ENCODE measurements at regions of chr15 and their contacts with region 1.

Region 1: DNA sequence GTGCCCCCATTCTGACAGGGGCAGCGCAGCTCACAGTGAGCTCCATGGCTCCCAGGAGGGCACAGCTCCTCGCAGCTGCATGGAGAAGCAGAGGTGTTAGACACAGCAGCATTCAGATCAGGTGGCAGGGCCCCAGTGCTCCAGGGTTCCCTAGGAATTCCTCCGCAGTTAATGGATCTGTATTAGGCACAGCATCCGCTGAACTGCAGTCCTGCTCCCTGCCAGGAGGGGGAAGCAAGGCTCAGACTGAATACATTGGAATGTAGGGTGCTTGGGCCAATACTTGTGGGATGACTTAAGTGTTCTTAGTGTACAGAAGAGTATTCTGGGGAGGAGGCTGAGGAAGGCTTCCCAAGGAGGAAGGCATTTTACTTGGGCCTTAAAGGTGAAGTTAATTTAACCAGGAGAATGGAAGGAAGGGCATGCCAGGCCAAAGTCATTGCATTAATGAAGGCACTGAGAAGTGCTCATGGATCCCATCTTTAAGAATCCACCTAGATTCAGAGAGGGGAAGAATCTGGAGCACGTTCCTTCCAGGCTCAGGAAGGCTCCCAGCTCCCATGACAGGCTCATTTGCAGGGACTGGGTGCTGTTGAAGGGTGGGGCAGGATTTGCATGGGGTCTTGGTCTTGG is 111.6 kb downstream of the RAB11A start:
- DNase-seq: peak; percentile 69 to 90
- H3K4me3 ChIP-seq: no peak overlapping the region
- H3K27ac ChIP-seq: no peak overlapping the region
- H3K4me1 ChIP-seq: peaks cover 10 to 21% (median 11%) of the 10 kb centered on the region in 4 experiments
- H3K27me3 ChIP-seq: no peaks in the 10 kb centered on the region
- CTCF ChIP-seq: peak; percentile 80 to 96 (median 86)
- EP300 ChIP-seq: no peak
- POLR2A ChIP-seq: no peak
- RAD21 ChIP-seq: peak; percentile 79 to 86

Region 2: DNA sequence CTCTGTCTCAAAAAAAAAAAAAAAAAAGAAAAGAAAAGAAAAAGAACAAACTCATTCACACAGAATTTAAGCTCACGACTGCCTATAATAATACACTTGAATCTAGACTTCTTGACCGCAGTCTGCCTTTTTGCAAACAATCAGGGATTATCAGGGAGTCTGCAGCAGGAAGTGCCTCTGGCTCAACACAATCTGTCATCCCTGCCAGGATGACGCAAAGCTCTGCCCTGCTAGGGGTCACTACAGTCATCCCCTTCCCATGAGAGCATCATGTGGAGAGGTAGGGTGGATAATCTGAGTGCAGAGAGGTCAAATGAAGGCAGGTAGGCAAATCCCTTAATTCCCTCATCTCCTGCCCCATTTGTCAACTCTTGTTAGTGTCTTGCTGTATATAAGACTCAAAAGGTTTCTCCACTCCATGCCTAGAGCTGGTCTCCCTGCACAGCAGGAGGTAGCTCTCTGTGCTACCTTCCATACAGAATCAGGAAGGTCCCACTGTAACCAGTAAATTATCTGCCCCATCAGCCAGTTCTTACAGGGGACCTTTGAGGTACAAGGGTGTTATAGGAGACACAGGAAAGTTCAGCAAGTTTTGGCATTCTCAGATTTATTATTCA is 870.2 kb before region 1 on chr15:
- CTCF ChIA-PET with region 1: no interaction called
- POLR2A ChIA-PET with region 1: no interaction called
- DNase-seq: no peak
- H3K4me3 ChIP-seq: no peak overlapping the region
- H3K27ac ChIP-seq: no peak overlapping the region
- H3K4me1 ChIP-seq: no peaks in the 10 kb centered on the region
- H3K27me3 ChIP-seq: no peaks in the 10 kb centered on the region
- CTCF ChIP-seq: no peak
- EP300 ChIP-seq: no peak
- POLR2A ChIP-seq: no peak
- RAD21 ChIP-seq: no peak

Region 3: DNA sequence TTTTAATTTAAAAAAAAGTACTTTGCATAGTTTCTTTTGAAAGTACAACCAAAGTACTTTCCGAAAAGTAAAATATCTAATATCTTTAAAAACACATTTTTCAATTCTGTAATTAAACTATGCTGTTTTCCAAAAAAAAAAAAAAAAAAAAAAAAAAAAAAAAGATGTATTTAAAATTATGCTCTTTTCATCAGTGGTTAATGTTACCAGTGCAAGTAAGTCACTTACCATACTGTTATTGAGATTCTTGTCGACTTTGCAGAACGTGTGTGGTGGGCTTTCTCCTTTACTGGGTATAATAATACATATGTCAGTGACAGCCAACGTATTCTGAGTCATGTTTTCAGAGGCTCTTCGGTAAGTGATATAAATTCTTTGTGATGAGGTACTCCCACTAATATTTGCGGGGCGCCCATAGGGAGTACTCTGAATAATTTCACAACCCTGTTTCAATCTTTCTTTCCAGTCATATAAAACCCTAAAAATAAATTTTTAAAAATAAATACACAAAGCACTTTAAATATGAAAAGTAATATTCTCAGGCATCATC is 228.7 kb before region 1 on chr15:
- CTCF ChIA-PET with region 1: no interaction called
- POLR2A ChIA-PET with region 1: no interaction called
- DNase-seq: no peak
- H3K4me3 ChIP-seq: no peak overlapping the region
- H3K27ac ChIP-seq: no peak overlapping the region
- H3K4me1 ChIP-seq: no peaks in the 10 kb centered on the region
- H3K27me3 ChIP-seq: no peaks in the 10 kb centered on the region
- CTCF ChIP-seq: no peak
- EP300 ChIP-seq: no peak
- POLR2A ChIP-seq: no peak
- RAD21 ChIP-seq: no peak

Region 4: DNA sequence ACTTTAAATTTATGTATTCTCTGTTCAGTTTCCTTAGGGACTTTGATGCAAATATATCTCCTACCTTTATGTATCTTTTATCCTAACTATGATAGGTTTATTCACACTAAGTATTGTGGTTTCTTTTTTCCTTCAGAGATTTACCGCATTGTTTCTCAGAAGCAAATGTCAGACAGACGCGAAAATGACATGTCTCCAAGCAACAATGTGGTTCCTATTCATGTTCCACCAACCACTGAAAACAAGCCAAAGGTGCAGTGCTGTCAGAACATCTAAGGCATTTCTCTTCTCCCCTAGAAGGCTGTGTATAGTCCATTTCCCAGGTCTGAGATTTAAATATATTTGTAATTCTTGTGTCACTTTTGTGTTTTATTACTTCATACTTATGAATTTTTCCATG is 93.4 kb before region 1 on chr15:
- CTCF ChIA-PET with region 1: no interaction called
- POLR2A ChIA-PET with region 1: no interaction called
- DNase-seq: no peak
- H3K4me3 ChIP-seq: no peak overlapping the region
- H3K27ac ChIP-seq: no peak overlapping the region
- H3K4me1 ChIP-seq: no peaks in the 10 kb centered on the region
- H3K27me3 ChIP-seq: no peaks in the 10 kb centered on the region
- CTCF ChIP-seq: no peak
- EP300 ChIP-seq: no peak
- POLR2A ChIP-seq: no peak
- RAD21 ChIP-seq: no peak

Region 5: DNA sequence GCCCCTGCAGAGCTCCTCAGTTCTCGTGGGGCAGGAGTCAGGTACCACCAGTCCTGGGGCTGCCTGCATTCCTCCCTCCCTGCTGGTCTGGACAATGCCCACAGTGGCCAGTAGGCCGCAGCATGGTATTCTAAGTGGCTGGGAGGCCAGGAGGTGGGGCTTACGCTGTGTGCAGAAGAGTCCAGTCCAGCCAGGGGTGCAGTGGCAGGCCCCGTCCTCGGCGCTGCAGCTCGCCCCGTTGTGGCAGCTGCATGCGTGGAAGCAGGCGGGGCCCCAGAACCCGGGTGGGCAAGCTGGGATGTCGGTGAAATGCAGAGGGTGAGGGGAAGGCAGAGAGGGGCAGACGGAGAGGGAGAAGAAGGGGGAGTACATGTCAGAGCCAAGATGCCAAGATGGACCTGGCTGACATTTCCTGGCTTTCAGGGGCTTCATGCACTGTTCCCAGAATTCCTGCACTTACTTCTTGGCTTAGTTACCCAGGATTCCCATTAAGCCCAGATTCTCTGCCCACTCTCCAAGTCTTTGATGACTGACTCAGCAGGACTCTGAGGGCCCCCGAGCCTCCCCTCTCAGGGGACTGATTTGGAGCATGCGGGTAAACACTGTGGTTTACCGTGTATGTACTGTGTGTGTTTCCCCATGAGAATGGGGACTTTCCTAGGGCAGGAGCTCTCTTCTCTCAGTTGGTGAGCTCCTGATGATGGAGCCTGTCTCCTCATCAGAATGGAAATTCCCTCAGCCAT is 64.1 kb before region 1 on chr15:
- CTCF ChIA-PET with region 1: interaction called, 10 read pairs
- POLR2A ChIA-PET with region 1: no interaction called
- DNase-seq: peak; percentile 47 to 81
- H3K4me3 ChIP-seq: no peak overlapping the region
- H3K27ac ChIP-seq: no peak overlapping the region
- H3K4me1 ChIP-seq: peaks cover 0 to 8% (median 3%) of the 10 kb centered on the region in 4 experiments; a peak in 5 of 7 replicates
- H3K27me3 ChIP-seq: no peaks in the 10 kb centered on the region
- CTCF ChIP-seq: peak; percentile 88 to 94 (median 91)
- EP300 ChIP-seq: 0 out of 3 replicates have a peak, but pooled peaks of 1 of the 2 experiments have one; percentile 22
- POLR2A ChIP-seq: no peak
- RAD21 ChIP-seq: peak; percentile 91 to 98

Region 6: DNA sequence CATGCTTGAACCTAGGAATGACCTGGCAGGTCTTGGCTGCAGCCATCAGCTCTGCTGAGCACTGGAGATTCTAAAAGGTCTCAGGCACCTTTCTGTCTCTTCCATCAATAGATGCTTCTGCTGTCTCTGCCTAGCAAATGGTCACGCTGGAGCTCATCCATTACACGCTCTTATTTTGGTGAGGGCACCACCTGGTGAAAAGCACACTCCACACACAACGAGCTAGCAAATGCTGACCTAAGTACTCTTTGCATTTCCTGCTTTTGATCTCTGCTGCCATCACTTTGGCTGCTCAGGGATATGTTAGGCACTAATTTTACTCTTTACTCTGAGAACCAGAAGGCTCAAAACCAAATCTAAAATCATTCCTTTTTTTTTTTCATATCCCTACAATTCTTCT is 20.4 kb before region 1 on chr15:
- CTCF ChIA-PET with region 1: interaction called, 18 read pairs
- POLR2A ChIA-PET with region 1: interaction called, 3 read pairs
- DNase-seq: no peak
- H3K4me3 ChIP-seq: no peak overlapping the region
- H3K27ac ChIP-seq: no peak overlapping the region
- H3K4me1 ChIP-seq: peaks cover 0 to 9% (median 0%) of the 10 kb centered on the region in 4 experiments; a peak in 1 of 7 replicates
- H3K27me3 ChIP-seq: peaks cover 0 to 4% (median 0%) of the 10 kb centered on the region in 4 experiments; a peak in 1 of 7 replicates
- CTCF ChIP-seq: no peak
- EP300 ChIP-seq: no peak
- POLR2A ChIP-seq: no peak
- RAD21 ChIP-seq: no peak

Region 7: DNA sequence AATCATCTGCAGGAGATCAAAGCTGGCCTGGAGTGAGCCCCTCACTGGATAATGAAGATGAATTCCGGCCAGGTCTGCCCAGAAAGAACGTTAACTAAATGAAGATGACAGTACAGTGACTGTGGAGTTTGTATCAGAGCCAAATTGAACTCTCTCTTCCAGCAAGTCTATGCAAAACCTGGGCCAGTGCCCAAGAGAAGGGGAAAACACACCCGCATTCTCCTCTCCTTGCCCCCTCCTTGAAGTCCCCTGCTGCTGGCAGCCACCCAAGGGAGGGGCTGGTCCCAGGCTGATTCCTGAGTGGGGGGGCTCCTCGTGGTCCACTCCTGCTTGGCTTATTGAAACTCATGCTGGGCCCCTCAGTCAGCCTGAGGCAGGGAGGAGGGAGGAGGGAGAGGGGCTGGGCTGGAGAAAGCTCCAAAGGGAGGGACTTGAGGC is 44.1 kb after region 1 on chr15:
- CTCF ChIA-PET with region 1: interaction called, 11 read pairs
- POLR2A ChIA-PET with region 1: no interaction called
- DNase-seq: no peak
- H3K4me3 ChIP-seq: peak overlapping the region in 1 of 4 experiments; percentile 35; a peak in 2 of 8 replicates
- H3K27ac ChIP-seq: no peak overlapping the region
- H3K4me1 ChIP-seq: peaks cover 17 to 42% (median 24%) of the 10 kb centered on the region in 4 experiments
- H3K27me3 ChIP-seq: no peaks in the 10 kb centered on the region
- CTCF ChIP-seq: no peak
- EP300 ChIP-seq: no peak
- POLR2A ChIP-seq: no peak
- RAD21 ChIP-seq: no peak

Region 8: DNA sequence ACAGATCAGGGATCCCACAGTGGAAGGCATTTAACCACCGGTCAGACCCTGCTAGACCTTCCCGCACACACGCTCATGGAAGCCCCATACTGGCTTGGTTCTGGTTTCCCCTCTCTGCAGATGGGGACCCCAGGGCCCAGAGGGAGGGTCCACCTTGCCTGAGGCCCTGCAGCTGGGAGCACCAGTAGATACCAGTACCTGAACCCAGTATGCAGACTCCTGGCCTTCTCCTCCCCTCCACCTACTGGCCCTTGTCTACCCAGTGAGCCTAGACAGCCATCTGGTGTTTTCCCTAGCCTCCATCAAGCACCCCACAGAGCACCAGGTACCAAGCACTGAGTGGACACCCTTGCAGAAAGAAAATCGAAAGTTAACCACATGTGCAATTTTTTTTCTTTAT is 207.5 kb after region 1 on chr15:
- CTCF ChIA-PET with region 1: interaction called, 12 read pairs
- POLR2A ChIA-PET with region 1: no interaction called
- DNase-seq: no peak
- H3K4me3 ChIP-seq: no peak overlapping the region
- H3K27ac ChIP-seq: no peak overlapping the region
- H3K4me1 ChIP-seq: peaks cover 9 to 24% (median 10%) of the 10 kb centered on the region in 4 experiments; a peak in 6 of 7 replicates
- H3K27me3 ChIP-seq: no peaks in the 10 kb centered on the region
- CTCF ChIP-seq: peak; percentile 4 to 37 (median 18)
- EP300 ChIP-seq: no peak
- POLR2A ChIP-seq: no peak
- RAD21 ChIP-seq: peak; percentile 53 to 66

Measured in H1 (cell line).